Activated CD4-positive, alpha-beta memory T cell treated with anti-CD3 and anti-CD28 coated beads for 36 hours (primary cell): ENCODE measurements at regions of chr16 and their contacts with region 1.

Region 1: GRCh38 chr16:27235055-27235937 is 32.0 kb downstream of the KDM8 start:
- DNase-seq: peak; percentile 92
- H3K4me3 Mint-ChIP-seq: peak overlapping the region; percentile 59
- H3K27ac Mint-ChIP-seq: peak overlapping the region; percentile 99
- H3K4me1 Mint-ChIP-seq: peaks cover 94% of the 10 kb centered on the region
- H3K27me3 Mint-ChIP-seq: no peaks in the 10 kb centered on the region

Region 2: GRCh38 chr16:27203429-27204231 is 31.7 kb before region 1 on chr16 and contains the start of gene KDM8:
- CTCF ChIA-PET with region 1: interaction called, 12 read pairs
- POLR2A ChIA-PET with region 1: interaction called, 6 read pairs
- intact Hi-C with region 1: loop called (anchors 1 kb)
- DNase-seq: peak; percentile 100
- H3K4me3 Mint-ChIP-seq: peak within 1 kb of the TSS; percentile 95
- H3K27ac Mint-ChIP-seq: peak within 1 kb of the TSS; percentile 97
- H3K4me1 Mint-ChIP-seq: peaks cover 47% of the 10 kb centered on the region
- H3K27me3 Mint-ChIP-seq: no peaks in the 10 kb centered on the region
- total RNA-seq, gene KDM8: 8.7 to 9.7 TPM

Region 3: GRCh38 chr16:27273670-27274423 is 38.6 kb after region 1 on chr16:
- CTCF ChIA-PET with region 1: interaction called, 32 read pairs
- POLR2A ChIA-PET with region 1: interaction called, 13 read pairs
- intact Hi-C with region 1: loop called (anchors 1 kb)
- DNase-seq: peak; percentile 57
- H3K4me3 Mint-ChIP-seq: no peak overlapping the region
- H3K27ac Mint-ChIP-seq: peak overlapping the region; percentile 89
- H3K4me1 Mint-ChIP-seq: peaks cover 57% of the 10 kb centered on the region
- H3K27me3 Mint-ChIP-seq: peaks cover 3% of the 10 kb centered on the region

Region 4: DNA sequence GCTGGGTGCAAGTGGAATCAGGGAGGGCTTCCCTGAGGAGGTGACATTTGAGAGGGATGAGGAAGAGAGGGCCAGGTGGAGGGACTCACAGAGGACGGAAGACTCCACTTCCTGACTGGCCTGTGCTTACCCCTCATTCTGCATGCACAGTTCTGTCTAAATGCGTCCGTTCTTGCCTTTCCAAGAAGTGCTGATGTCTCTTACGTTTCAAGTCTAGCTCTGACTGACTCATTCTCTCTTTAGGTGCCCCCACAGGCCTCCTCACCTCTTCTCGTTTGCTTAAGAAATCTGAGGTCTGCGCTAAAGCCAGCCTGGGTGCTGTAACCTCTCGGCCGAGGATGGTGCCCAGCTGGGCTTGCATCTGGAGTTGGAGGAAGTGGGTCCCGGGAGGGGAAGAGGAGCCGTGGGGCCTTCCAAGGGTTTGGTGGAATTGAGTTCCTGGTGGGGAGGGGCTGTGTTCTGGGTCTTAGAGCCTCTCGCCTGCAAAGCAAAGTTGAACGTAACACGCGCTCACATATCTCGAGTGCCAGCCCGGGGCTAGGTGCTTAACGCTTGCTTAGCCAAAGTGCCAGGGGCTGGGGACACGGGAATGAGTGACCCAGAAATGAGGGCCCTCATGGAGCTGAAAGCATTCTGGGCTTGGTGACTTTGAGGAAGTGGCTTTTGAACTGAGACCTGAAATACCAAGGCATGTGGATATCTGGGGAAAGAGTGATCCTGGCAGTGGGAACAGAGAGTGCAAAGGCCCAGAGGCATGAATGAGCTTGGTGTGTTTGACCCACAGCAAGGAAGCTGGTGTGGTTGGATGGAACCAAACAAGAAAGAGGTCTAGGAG is 83.3 kb after region 1 on chr16:
- CTCF ChIA-PET with region 1: interaction called, 113 read pairs
- POLR2A ChIA-PET with region 1: interaction called, 123 read pairs
- intact Hi-C with region 1: loop called (anchors 1 kb)
- DNase-seq: peak; percentile 79
- H3K4me3 Mint-ChIP-seq: peak overlapping the region; percentile 94
- H3K27ac Mint-ChIP-seq: peak overlapping the region; percentile 96
- H3K4me1 Mint-ChIP-seq: peaks cover 76% of the 10 kb centered on the region
- H3K27me3 Mint-ChIP-seq: no peaks in the 10 kb centered on the region

Region 5: GRCh38 chr16:27367461-27368357 is 132.4 kb after region 1 on chr16:
- CTCF ChIA-PET with region 1: interaction called, 108 read pairs
- POLR2A ChIA-PET with region 1: interaction called, 61 read pairs
- intact Hi-C with region 1: loop called (anchors 1 kb)
- DNase-seq: peak; percentile 95
- H3K4me3 Mint-ChIP-seq: peak overlapping the region; percentile 54
- H3K27ac Mint-ChIP-seq: peak overlapping the region; percentile 98
- H3K4me1 Mint-ChIP-seq: peaks cover 70% of the 10 kb centered on the region
- H3K27me3 Mint-ChIP-seq: no peaks in the 10 kb centered on the region

Region 6: GRCh38 chr16:27408012-27408601 is 172.8 kb after region 1 on chr16:
- CTCF ChIA-PET with region 1: interaction called, 15 read pairs
- POLR2A ChIA-PET with region 1: interaction called, 24 read pairs
- intact Hi-C with region 1: no loop called
- DNase-seq: peak; percentile 73
- H3K4me3 Mint-ChIP-seq: peak overlapping the region; percentile 100
- H3K27ac Mint-ChIP-seq: peak overlapping the region; percentile 96
- H3K4me1 Mint-ChIP-seq: peaks cover 71% of the 10 kb centered on the region
- H3K27me3 Mint-ChIP-seq: no peaks in the 10 kb centered on the region

Region 7: GRCh38 chr16:27436921-27437650 is 201.8 kb after region 1 on chr16:
- CTCF ChIA-PET with region 1: no interaction called
- POLR2A ChIA-PET with region 1: no interaction called
- intact Hi-C with region 1: no loop called
- DNase-seq: peak; percentile 4
- H3K4me3 Mint-ChIP-seq: no peak overlapping the region
- H3K27ac Mint-ChIP-seq: peak overlapping the region; percentile 11
- H3K4me1 Mint-ChIP-seq: peaks cover 4% of the 10 kb centered on the region
- H3K27me3 Mint-ChIP-seq: no peaks in the 10 kb centered on the region